Left ventricle myocardium inferior (tissue), 1 donor: ENCODE measurements at regions of chr1 and their contacts with region 1.

Region 1: DNA sequence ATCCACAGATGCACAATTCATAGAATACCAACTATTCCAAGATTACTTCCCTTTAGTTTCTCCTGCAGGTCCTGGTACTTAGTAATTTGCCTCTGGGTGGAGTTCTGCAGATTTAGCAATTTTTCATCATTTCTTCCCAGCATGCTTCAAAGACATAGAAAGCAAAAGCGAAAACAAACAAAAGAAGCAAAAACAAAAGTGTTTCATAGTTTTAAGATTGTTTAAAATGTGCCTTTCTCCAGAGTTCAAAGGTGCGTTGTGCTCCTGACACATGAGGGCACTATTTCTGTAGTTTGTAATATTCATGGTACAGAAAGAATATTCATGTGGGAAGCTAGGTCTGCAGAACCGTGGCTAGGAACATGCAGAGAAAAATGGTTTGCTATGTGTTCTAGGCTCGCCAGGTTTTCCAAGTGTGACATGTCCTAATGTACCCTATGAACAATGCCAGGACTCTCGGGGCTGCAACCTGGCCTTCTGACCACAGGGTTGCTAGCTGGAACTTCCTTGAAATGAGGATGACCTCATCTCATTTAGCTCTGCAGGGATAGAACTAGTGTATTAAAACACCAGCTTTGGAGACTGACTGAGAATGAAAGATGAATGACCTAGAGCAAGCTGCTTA is 30.0 kb upstream of the RCSD1 start:
- DNase-seq: peak; percentile 33
- H3K4me3 ChIP-seq: peak overlapping the region; percentile 7
- H3K27ac ChIP-seq: peak overlapping the region; percentile 65
- H3K4me1 ChIP-seq: peaks cover 35% of the 10 kb centered on the region
- H3K27me3 ChIP-seq: no peaks in the 10 kb centered on the region
- CTCF ChIP-seq: peak; percentile 77

Region 2: DNA sequence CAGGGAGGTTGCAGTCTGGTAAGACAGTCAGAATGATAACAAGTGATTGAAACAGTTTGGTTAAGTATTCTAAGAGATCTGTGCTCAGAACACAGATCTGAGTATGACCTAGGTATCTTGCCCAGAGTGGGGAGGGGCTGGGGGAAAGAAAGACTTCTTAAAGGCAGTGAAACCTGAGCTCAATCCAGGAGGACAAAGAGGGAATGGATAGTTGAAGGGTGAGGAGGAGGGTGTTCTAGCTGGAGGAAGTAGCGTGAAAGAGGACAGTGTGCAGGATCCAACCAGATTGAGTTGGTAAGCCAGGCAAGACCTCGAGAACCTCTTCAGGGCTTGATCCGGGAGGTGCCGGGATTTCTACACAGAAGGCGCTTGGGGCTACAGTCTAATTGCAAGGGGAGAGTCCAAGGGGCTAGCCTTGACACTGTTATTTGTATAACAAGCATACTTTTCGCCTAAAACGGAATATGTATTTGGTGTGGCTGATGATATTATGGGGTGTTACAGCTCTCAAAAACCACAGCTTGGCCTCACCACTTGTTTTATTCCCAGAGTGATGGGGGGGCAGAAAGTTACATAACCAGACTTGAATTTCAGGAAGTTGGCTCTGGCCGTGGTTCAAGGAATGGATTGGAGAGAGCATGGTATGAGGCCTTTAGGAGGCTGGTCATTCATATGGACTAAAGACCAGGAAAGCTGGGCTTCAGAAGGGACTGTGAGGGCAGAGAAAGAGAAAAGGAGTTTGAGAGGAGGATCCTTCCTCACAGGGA is 49.1 kb after region 1 on chr1:
- intact Hi-C with region 1: no loop called
- DNase-seq: no peak
- H3K4me3 ChIP-seq: no peak overlapping the region
- H3K27ac ChIP-seq: peak overlapping the region; percentile 83
- H3K4me1 ChIP-seq: peaks cover 99% of the 10 kb centered on the region
- H3K27me3 ChIP-seq: no peaks in the 10 kb centered on the region
- CTCF ChIP-seq: no peak

Region 3: GRCh38 chr1:167663002-167663772 is 63.1 kb after region 1 on chr1:
- intact Hi-C with region 1: no loop called
- DNase-seq: peak; percentile 62
- H3K4me3 ChIP-seq: no peak overlapping the region
- H3K27ac ChIP-seq: peak overlapping the region; percentile 83
- H3K4me1 ChIP-seq: peaks cover 99% of the 10 kb centered on the region
- H3K27me3 ChIP-seq: no peaks in the 10 kb centered on the region
- CTCF ChIP-seq: no peak

Region 4: GRCh38 chr1:167687919-167688519 is 88.0 kb after region 1 on chr1:
- intact Hi-C with region 1: loop called (anchors 2 kb)
- DNase-seq: no peak
- H3K4me3 ChIP-seq: no peak overlapping the region
- H3K27ac ChIP-seq: peak overlapping the region; percentile 93
- H3K4me1 ChIP-seq: peaks cover 82% of the 10 kb centered on the region
- H3K27me3 ChIP-seq: no peaks in the 10 kb centered on the region
- CTCF ChIP-seq: peak; percentile 98

Region 5: DNA sequence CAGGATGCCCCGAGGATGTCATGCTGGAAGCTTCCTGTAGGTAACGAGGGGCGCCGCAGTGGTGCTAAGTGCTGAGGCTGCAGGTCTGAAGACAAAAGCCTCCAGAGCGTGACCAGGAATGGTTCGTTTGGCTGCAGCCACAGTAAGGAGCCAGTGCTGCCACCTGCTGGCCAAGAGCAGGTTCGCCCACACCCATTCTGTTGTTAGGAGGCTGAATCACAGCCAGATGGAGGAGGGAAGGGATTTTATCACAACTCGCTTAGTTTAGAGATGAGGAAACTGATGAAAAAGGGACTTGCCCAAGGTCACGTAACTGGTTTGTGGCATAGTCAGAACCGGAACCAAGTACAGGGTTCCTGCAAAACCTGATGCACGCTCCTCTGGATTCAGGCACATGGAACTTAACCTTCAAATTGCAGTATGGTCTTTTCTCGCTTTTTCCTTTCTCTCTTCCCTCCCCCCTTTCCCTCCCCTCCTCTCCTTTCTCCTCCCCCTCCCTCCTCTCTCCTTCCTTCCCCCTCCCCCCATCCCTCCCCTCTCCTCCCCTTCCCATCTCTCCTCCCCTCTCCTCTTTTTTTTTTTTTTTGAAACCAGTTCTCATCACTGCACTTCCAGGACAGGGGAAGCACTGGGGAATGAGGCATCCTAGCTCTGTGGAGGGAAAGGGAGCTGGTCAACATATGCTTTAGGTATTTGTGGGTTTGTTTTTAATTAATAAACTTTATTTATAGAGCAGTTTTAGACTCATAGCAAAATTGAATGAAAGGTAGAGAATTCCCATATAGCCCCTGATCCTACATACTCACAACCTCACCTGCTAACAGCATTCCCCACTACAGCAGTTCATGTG is 203.5 kb after region 1 on chr1:
- intact Hi-C with region 1: loop called (anchors 10 kb)
- DNase-seq: peak; percentile 92
- H3K4me3 ChIP-seq: peak overlapping the region; percentile 29
- H3K27ac ChIP-seq: peak overlapping the region; percentile 5
- H3K4me1 ChIP-seq: peaks cover 6% of the 10 kb centered on the region
- H3K27me3 ChIP-seq: no peaks in the 10 kb centered on the region
- CTCF ChIP-seq: peak; percentile 99